Panc1 (cell line): ENCODE measurements at regions of chr18 and their contacts with region 1.

Region 1: DNA sequence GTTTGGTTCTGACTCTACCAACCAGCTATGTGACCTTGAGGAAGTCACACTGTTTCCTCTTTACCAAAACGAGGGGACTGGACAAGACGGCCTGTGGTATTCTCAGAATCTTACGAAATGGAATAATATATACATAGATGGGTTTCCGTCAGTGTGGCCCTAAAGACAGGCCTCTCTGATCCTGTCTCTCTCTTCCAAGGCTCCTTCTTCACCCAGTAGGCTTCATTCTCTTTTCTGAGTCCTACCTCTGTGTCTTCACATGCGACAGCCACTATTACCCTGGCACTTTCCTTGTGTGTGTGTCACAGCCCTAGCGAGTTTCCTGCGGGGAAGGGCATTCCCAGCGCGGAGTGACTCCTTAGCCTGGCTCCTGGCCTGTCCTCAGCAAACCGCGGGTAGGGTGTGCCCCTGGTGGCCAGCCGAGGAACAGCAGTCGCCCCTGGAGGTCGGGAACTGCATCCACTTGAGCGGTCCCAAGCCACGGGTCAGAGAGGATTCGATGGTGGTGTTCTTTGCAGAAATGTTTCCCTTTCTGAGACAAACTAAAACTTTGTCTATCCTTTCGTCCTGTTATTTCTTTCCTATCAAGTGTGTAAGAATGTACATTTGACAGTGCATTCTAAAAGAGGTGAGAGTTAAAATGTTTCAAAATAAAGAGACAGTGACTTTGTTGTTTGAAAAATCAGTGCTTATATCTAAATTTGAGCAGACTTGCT is 63.3 kb downstream of the RAB31 start:
- DNase-seq: peak; percentile 48
- ATAC-seq: peak; percentile 93
- H3K4me3 ChIP-seq: no peak overlapping the region
- H3K27ac ChIP-seq: peak overlapping the region; percentile 77
- H3K4me1 ChIP-seq: peaks cover 61% of the 10 kb centered on the region
- H3K27me3 ChIP-seq: no peaks in the 10 kb centered on the region
- CTCF ChIP-seq: peak; percentile 99

Region 2: GRCh38 chr18:9574473-9575115 is 196.8 kb before region 1 on chr18:
- CTCF ChIA-PET with region 1: no interaction called
- POLR2A ChIA-PET with region 1: no interaction called
- in situ Hi-C with region 1: no loop called
- intact Hi-C with region 1: no loop called
- DNase-seq: no peak
- ATAC-seq: no peak
- H3K4me3 ChIP-seq: no peak overlapping the region
- H3K27ac ChIP-seq: no peak overlapping the region
- H3K4me1 ChIP-seq: peaks cover 5% of the 10 kb centered on the region; the same call in 1 of the 2 replicates
- H3K27me3 ChIP-seq: no peaks in the 10 kb centered on the region
- CTCF ChIP-seq: no peak

Region 3: GRCh38 chr18:9711361-9712129 is 59.9 kb before region 1 on chr18:
- CTCF ChIA-PET with region 1: no interaction called
- POLR2A ChIA-PET with region 1: no interaction called
- in situ Hi-C with region 1: no loop called
- intact Hi-C with region 1: loop called (anchors 10 kb)
- DNase-seq: no peak
- ATAC-seq: no peak
- H3K4me3 ChIP-seq: peak overlapping the region in 1 of 2 experiments; percentile 19; a peak in 1 of 4 replicates
- H3K27ac ChIP-seq: peak overlapping the region; percentile 72
- H3K4me1 ChIP-seq: peaks cover 75% of the 10 kb centered on the region
- H3K27me3 ChIP-seq: no peaks in the 10 kb centered on the region
- CTCF ChIP-seq: no peak